Natural killer cell (primary cell): ENCODE measurements at regions of chr2 and their contacts with region 1.

Region 1: GRCh38 chr2:129673847-129674711 is 305.4 kb upstream of the RAB6C start:
- DNase-seq: no peak
- ATAC-seq: no peak
- H3K4me3 ChIP-seq: no peak overlapping the region
- H3K4me3 Mint-ChIP-seq: no peak overlapping the region
- H3K27ac ChIP-seq: no peak overlapping the region
- H3K27ac Mint-ChIP-seq: no peak overlapping the region
- H3K4me1 ChIP-seq: no peaks in the 10 kb centered on the region
- H3K4me1 Mint-ChIP-seq: no peaks in the 10 kb centered on the region
- H3K27me3 ChIP-seq: no peaks in the 10 kb centered on the region
- H3K27me3 Mint-ChIP-seq: peaks cover 8 to 10% of the 10 kb centered on the region in 2 donors
- CTCF ChIP-seq: no peak

Region 2: GRCh38 chr2:129689653-129690448 is 15.8 kb after region 1 on chr2:
- intact Hi-C with region 1: loop called (anchors 2 kb)
- DNase-seq: no peak
- ATAC-seq: peak in 1 of 3 donors; percentile 26
- H3K4me3 ChIP-seq: no peak overlapping the region
- H3K4me3 Mint-ChIP-seq: no peak overlapping the region
- H3K27ac ChIP-seq: no peak overlapping the region
- H3K27ac Mint-ChIP-seq: no peak overlapping the region
- H3K4me1 ChIP-seq: no peaks in the 10 kb centered on the region
- H3K4me1 Mint-ChIP-seq: peaks cover 0 to 8% of the 10 kb centered on the region in 2 donors
- H3K27me3 ChIP-seq: no peaks in the 10 kb centered on the region
- H3K27me3 Mint-ChIP-seq: peaks cover 0 to 17% of the 10 kb centered on the region in 2 donors
- CTCF ChIP-seq: no peak